RWPE1 (cell line): ENCODE measurements at regions of chr14 and their contacts with region 1.

Region 1: DNA sequence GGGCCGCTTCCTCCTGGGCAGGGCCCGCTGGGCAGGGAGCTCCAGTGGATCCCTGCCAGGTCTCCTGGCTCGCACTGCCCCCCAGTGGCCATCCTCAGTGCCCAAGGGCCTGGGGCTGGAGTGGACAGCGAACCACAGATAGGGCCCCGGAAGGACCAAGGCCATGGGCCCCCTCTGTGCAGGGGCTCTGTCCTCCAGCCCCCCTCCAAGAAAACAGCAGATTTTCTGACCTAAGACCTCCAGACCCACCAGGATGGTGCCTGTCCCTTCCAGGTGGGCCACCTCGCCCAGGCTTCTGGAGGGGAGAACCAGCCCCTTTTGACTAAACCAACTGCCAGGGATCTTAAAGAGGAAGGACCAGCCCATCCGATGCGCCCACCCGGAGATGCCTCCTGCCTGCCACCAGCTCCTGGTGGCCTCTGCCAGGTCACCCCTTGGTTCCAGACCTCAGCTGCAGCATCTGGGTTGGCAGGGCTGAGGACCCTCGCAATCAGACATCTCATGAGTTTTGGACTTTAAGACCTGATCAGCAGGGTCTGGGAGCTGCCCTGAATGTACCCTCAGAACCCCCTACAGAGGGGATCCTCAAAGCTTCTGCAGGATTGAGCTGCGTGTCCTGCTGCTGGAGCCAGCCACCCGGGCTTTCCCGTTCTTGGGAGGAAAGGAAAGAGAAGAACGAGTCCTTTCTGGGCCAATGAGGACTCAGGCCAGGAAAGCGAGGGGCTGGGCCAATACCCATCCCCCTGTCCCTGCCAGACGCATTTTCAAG is 325.8 kb upstream of the DIO3 start:
- DNase-seq: peak; percentile 64
- H3K27ac ChIP-seq: no peak overlapping the region
- CTCF ChIP-seq: peak; percentile 64

Region 2: GRCh38 chr14:100850841-100851585 is 384.5 kb before region 1 on chr14:
- CTCF ChIA-PET with region 1: interaction called, 11 read pairs
- POLR2A ChIA-PET with region 1: no interaction called
- DNase-seq: peak; percentile 65
- H3K27ac ChIP-seq: no peak overlapping the region
- CTCF ChIP-seq: peak; percentile 50

Region 3: DNA sequence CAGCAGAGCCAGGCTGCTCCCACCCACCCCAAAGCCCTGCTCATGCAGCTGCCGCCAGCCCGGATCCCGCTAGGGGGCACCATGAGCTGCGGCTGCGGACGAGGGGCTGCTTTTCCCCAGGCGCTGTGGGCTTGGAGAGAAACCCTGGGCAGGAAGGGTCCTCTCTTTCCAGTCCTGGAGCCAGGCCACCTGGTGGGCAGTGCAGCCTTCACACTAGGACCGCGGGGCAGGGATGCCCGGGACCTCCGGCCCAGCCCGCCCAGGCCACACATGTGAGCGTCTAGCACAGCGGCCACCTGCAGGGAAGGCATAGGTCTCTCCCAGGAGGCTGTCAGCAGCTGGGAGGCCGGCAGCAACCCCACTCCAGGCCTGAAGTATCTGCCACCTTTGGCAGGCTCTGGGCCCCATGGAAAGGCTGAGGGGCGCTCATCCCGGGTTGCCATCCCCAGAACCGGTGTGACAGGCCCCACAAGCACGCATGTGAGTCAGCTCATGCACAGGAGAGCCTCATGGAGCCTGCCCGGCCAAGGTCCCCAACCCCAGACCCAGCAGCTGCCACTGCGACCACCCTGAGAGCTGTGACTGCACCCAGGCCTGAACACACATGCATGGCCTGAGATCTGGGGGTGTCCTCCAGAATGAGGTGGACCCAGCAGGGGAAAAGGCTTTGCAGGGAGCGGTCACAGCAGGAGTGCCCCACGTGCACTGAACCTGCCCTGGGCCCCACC is 52.0 kb before region 1 on chr14:
- CTCF ChIA-PET with region 1: no interaction called
- POLR2A ChIA-PET with region 1: no interaction called
- DNase-seq: no peak
- H3K27ac ChIP-seq: no peak overlapping the region
- CTCF ChIP-seq: no peak

Region 4: DNA sequence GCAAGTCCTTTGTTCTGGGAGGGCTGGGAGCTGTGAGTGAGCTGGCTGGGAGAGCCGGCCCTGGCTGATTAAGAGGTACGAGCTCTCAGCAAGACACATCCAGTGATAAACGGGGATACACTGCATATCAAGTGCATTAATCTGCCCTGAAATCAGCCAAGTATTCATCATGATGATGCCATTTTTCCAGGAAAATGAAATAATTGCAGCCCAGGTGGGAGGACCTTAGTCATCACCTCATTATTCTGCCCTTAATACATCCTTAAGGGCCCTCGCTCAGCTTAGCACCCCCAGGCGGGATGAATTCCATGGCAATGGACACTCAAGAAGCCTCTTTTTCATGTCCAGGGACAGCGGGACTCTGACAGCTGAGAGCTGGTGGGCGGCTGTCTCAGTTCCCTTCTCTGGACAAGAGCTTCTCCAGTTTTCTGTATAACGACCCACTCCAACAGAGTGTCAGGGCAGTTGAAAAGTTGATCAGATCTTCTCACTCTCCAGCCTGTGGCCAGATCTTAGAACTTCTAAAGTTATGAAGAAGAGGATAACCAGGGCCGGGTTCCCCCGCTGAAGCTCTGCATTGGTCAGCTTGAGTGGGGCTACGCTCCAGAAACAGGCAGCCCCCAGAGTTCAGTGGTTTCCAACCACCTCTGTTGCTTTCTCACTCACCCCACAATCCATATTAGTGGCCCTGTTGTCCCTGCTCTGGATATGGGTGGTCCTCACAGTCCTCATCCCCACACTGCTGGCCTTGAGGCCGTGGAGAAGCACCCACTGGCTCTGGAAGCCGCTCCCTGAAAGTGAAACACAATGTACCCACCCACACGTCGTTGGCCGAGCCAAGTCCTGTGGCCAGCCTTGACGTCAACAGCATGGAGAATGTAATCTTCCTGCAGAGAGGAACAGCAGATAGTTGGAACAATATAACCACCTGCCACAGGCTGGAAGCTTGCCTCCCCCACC is 19.6 kb after region 1 on chr14:
- CTCF ChIA-PET with region 1: no interaction called
- POLR2A ChIA-PET with region 1: no interaction called
- DNase-seq: no peak
- H3K27ac ChIP-seq: no peak overlapping the region
- CTCF ChIP-seq: no peak

Region 5: GRCh38 chr14:101315802-101316296 is 80.3 kb after region 1 on chr14:
- CTCF ChIA-PET with region 1: no interaction called
- POLR2A ChIA-PET with region 1: no interaction called
- DNase-seq: no peak
- H3K27ac ChIP-seq: no peak overlapping the region
- CTCF ChIP-seq: no peak